GM12878 (cell line): ENCODE measurements at regions of chr7 and their contacts with region 1.

Region 1: DNA sequence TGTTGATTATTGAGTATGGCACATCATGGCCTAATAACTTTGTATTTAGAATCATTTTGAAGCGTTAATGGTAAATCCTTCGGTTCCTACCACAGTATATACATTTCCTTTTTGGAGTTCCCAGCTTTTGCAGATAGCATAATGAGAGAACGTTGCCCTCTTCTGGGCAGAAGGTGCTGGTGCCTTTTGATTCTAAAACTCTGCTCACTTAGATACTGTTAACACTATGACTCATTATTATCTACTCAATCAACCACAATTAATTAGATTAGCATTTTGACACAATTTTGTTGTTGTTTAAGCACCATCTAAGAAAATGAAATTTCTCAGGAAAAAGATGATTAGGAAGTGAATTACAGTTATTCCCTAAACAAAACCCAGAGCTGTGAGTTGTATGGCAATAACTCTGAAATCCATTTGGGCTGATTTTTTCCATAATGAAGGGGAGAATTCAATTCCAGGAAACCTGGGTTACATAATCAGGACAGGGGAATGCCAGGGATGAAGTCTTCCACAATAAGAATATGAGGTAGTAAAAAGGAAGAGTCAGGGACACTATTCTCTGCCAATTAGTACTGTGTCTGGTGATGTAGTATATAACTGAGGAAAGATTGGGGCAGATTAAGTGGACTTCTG is 11.5 kb upstream of the DLD start:
- DNase-seq: no peak
- ATAC-seq: peak; percentile 87
- H3K4me3 ChIP-seq: no peak overlapping the region
- H3K27ac ChIP-seq: no peak overlapping the region
- H3K4me1 ChIP-seq: no peaks in the 10 kb centered on the region
- H3K27me3 ChIP-seq: no peaks in the 10 kb centered on the region; a peak in 1 of 4 replicates
- CTCF ChIP-seq: peak; percentile 70 to 78 (median 77)
- EP300 ChIP-seq: no peak
- POLR2A ChIP-seq: no peak
- RAD21 ChIP-seq: peak; percentile 68

Region 2: GRCh38 chr7:106793015-106793975 is 1086.2 kb before region 1 on chr7:
- CTCF ChIA-PET with region 1: interaction called, 3 read pairs
- POLR2A ChIA-PET with region 1: no interaction called
- RAD21 ChIA-PET with region 1: interaction called, 4 read pairs
- SMC1A ChIA-PET with region 1: no interaction called
- in situ Hi-C with region 1: loop called (anchors 10 kb)
- intact Hi-C with region 1: loop called (anchors 5 kb)
- DNase-seq: no peak
- ATAC-seq: peak; percentile 35; the same call in 1 of the 3 replicates
- H3K4me3 ChIP-seq: no peak overlapping the region
- H3K27ac ChIP-seq: no peak overlapping the region
- H3K4me1 ChIP-seq: peaks cover 11% of the 10 kb centered on the region
- H3K27me3 ChIP-seq: no peaks in the 10 kb centered on the region; a peak in 1 of 4 replicates
- CTCF ChIP-seq: peak; percentile 51 to 66 (median 61); a peak in 5 of 6 replicates
- EP300 ChIP-seq: no peak
- POLR2A ChIP-seq: no peak
- RAD21 ChIP-seq: peak; percentile 94

Region 3: GRCh38 chr7:107462740-107463444 is 416.6 kb before region 1 on chr7:
- CTCF ChIA-PET with region 1: interaction called, 17 read pairs
- POLR2A ChIA-PET with region 1: no interaction called
- RAD21 ChIA-PET with region 1: interaction called, 11 read pairs
- SMC1A ChIA-PET with region 1: interaction called, 7 read pairs
- in situ Hi-C with region 1: no loop called
- intact Hi-C with region 1: loop called (anchors 1 kb)
- DNase-seq: peak; percentile 19
- ATAC-seq: peak; percentile 90
- H3K4me3 ChIP-seq: no peak overlapping the region
- H3K27ac ChIP-seq: no peak overlapping the region
- H3K4me1 ChIP-seq: no peaks in the 10 kb centered on the region
- H3K27me3 ChIP-seq: no peaks in the 10 kb centered on the region
- CTCF ChIP-seq: peak; percentile 68 to 92 (median 76)
- EP300 ChIP-seq: no peak
- POLR2A ChIP-seq: no peak
- RAD21 ChIP-seq: peak; percentile 88

Region 4: GRCh38 chr7:107743567-107744344 is 135.8 kb before region 1 on chr7 and contains the start of gene CBLL1:
- CTCF ChIA-PET with region 1: interaction called, 25 read pairs
- POLR2A ChIA-PET with region 1: no interaction called
- RAD21 ChIA-PET with region 1: interaction called, 5 read pairs
- SMC1A ChIA-PET with region 1: interaction called, 16 read pairs
- in situ Hi-C with region 1: loop called (anchors 5 kb)
- intact Hi-C with region 1: loop called (anchors 2 kb)
- DNase-seq: peak; percentile 79
- ATAC-seq: peak; percentile 94
- H3K4me3 ChIP-seq: peak within 1 kb of the TSS; percentile 87
- H3K27ac ChIP-seq: peak within 1 kb of the TSS; percentile 100
- H3K4me1 ChIP-seq: peaks cover 8% of the 10 kb centered on the region
- H3K27me3 ChIP-seq: no peaks in the 10 kb centered on the region
- CTCF ChIP-seq: peak; percentile 67 to 74 (median 72)
- EP300 ChIP-seq: peak in 1 of 2 experiments; percentile 23; a peak in 1 of 4 replicates
- POLR2A ChIP-seq: peak; percentile 89
- RAD21 ChIP-seq: peak; percentile 54
- polyA plus RNA-seq, gene CBLL1: 8.6 to 9.3 TPM

Region 5: DNA sequence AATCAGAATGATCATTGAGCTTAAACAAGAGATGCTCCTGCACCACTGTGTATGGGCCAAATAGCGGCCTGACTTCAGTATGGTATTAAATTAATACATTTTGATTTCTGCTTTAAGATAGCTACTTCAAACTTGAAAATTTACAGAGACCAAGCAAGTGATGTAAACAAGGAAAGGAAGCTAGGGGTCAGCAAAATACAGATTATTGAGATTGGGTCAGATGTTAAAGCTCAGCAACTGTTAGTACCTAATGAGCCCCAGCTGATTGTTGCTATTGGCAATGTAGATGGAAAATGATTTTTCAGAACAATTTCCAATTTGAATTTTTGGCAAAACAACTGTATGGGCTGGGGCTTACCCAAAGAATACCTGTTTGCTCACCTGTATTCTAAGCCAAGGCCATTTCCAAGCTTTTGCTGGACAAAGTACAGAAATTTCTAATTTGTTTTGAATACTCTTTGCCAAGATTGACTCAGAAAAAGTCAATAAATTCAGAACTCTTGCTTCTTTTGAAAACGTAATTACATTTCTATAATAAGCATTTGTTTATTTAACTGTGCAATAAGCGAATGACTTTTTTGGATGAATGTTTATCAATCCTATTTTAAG is 11.6 kb before region 1 on chr7:
- CTCF ChIA-PET with region 1: interaction called, 11 read pairs
- POLR2A ChIA-PET with region 1: no interaction called
- RAD21 ChIA-PET with region 1: no interaction called
- SMC1A ChIA-PET with region 1: interaction called, 7 read pairs
- in situ Hi-C with region 1: no loop called
- intact Hi-C with region 1: no loop called
- DNase-seq: no peak
- ATAC-seq: no peak
- H3K4me3 ChIP-seq: no peak overlapping the region
- H3K27ac ChIP-seq: no peak overlapping the region
- H3K4me1 ChIP-seq: no peaks in the 10 kb centered on the region
- H3K27me3 ChIP-seq: no peaks in the 10 kb centered on the region; a peak in 2 of 4 replicates
- CTCF ChIP-seq: no peak
- EP300 ChIP-seq: no peak
- POLR2A ChIP-seq: no peak
- RAD21 ChIP-seq: no peak

Region 6: GRCh38 chr7:108016841-108017775 is 137.6 kb after region 1 on chr7:
- CTCF ChIA-PET with region 1: interaction called, 8 read pairs
- POLR2A ChIA-PET with region 1: no interaction called
- RAD21 ChIA-PET with region 1: no interaction called
- SMC1A ChIA-PET with region 1: interaction called, 15 read pairs
- in situ Hi-C with region 1: no loop called
- intact Hi-C with region 1: no loop called
- DNase-seq: no peak
- ATAC-seq: peak; percentile 79
- H3K4me3 ChIP-seq: no peak overlapping the region
- H3K27ac ChIP-seq: no peak overlapping the region
- H3K4me1 ChIP-seq: no peaks in the 10 kb centered on the region
- H3K27me3 ChIP-seq: peaks cover 3 to 4% of the 10 kb centered on the region in 2 experiments; a peak in 3 of 4 replicates
- CTCF ChIP-seq: peak; percentile 26 to 45 (median 31); a peak in 3 of 6 replicates
- EP300 ChIP-seq: no peak
- POLR2A ChIP-seq: no peak
- RAD21 ChIP-seq: 0 out of 2 replicates have a peak, but pooled peaks have one; percentile 12